MCF 10A (cell line): ENCODE measurements at regions of chr16 and their contacts with region 1.

Region 1: GRCh38 chr16:13453938-13454553 is 465.9 kb upstream of the ERCC4 start:
- DNase-seq: peak; percentile 58
- H3K4me3 Mint-ChIP-seq: no peak overlapping the region
- H3K27ac Mint-ChIP-seq: peak overlapping the region; percentile 75
- H3K4me1 Mint-ChIP-seq: peaks cover 23% of the 10 kb centered on the region
- H3K27me3 Mint-ChIP-seq: no peaks in the 10 kb centered on the region
- CTCF ChIP-seq: peak; percentile 62

Region 2: GRCh38 chr16:12455287-12455798 is 998.7 kb before region 1 on chr16:
- CTCF ChIA-PET with region 1: interaction called, 13 read pairs
- POLR2A ChIA-PET with region 1: no interaction called
- intact Hi-C with region 1: loop called (anchors 1 kb)
- DNase-seq: peak; percentile 56
- H3K4me3 Mint-ChIP-seq: no peak overlapping the region
- H3K27ac Mint-ChIP-seq: no peak overlapping the region
- H3K4me1 Mint-ChIP-seq: no peaks in the 10 kb centered on the region
- H3K27me3 Mint-ChIP-seq: no peaks in the 10 kb centered on the region
- CTCF ChIP-seq: peak; percentile 95

Region 3: DNA sequence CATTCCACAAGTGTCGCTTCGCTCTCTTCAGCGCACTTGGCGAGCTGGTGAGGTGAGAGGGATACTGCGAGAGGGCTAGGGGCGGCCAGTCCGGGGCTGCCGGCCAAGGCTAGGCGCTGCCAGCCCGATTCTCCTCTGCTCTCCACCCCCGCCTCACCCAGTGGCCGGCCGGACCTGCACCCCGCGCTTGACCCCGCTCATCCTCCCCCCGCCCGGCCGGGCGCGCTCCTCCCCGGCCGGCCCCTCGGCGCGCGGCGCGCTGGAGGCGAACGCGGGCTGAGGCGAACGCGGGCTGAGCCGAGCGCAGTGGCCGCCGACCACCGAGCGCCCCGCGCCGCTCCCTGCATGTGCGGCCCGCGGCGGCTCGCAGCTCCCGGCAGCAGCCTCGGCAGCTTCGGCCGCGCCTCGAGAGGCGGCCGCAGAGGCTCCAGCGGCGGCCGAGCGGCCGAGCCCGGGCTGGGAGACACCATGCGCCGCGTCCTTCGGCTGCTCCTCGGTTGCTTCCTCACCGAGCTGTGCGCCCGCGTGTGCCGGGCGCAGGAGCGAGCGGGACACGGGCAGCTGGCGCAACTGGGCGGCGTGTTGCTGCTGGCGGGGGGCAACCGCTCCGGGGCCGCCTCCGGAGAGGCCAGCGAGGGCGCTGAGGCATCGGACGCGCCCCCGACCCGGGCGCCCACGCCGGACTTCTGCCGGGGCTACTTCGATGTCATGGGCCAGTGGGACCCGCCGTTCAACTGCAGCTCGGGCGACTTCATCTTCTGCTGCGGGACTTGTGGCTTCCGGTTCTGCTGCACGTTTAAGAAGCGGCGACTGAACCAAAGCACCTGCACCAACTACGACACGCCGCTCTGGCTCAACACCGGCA is 552.2 kb before region 1 on chr16 and contains the start of gene SHISA9:
- CTCF ChIA-PET with region 1: interaction called, 45 read pairs
- POLR2A ChIA-PET with region 1: no interaction called
- intact Hi-C with region 1: loop called (anchors 1 kb)
- DNase-seq: no peak
- H3K4me3 Mint-ChIP-seq: peak within 1 kb of the TSS; percentile 81
- H3K27ac Mint-ChIP-seq: no peak within 1 kb of the TSS
- H3K4me1 Mint-ChIP-seq: no peaks in the 10 kb centered on the region
- H3K27me3 Mint-ChIP-seq: peaks cover 11% of the 10 kb centered on the region
- CTCF ChIP-seq: no peak
- total RNA-seq, gene SHISA9: 6.8 and 8.0 TPM in 2 replicates

Region 4: GRCh38 chr16:12971241-12971640 is 482.8 kb before region 1 on chr16:
- CTCF ChIA-PET with region 1: interaction called, 14 read pairs
- POLR2A ChIA-PET with region 1: no interaction called
- intact Hi-C with region 1: loop called (anchors 5 kb)
- DNase-seq: peak; percentile 98
- H3K4me3 Mint-ChIP-seq: no peak overlapping the region
- H3K27ac Mint-ChIP-seq: no peak overlapping the region
- H3K4me1 Mint-ChIP-seq: peaks cover 14% of the 10 kb centered on the region
- H3K27me3 Mint-ChIP-seq: no peaks in the 10 kb centered on the region
- CTCF ChIP-seq: no peak

Region 5: DNA sequence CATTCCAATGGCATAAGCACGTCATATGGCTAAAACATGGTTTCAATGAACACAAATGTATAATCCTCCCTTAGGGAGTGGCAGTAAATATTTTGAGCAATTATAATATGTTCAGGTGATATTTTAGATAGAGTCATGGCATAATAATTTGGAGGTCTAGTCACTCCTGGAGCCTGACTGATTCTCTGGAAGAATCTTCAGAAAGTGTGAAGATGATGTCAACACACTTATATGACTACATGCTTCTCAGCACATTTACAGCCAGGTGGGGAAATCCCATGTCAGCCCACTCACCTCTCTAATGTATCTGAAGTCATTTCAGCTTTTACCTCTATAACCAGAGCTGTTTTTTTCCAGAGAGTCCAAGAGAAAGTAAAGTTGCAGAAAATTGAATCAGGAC is 77.9 kb before region 1 on chr16:
- CTCF ChIA-PET with region 1: interaction called, 13 read pairs
- POLR2A ChIA-PET with region 1: no interaction called
- intact Hi-C with region 1: loop called (anchors 2 kb)
- DNase-seq: no peak
- H3K4me3 Mint-ChIP-seq: no peak overlapping the region
- H3K27ac Mint-ChIP-seq: peak overlapping the region; percentile 39
- H3K4me1 Mint-ChIP-seq: peaks cover 12% of the 10 kb centered on the region
- H3K27me3 Mint-ChIP-seq: no peaks in the 10 kb centered on the region
- CTCF ChIP-seq: no peak

Region 6: GRCh38 chr16:13483121-13483520 is 29.1 kb after region 1 on chr16:
- CTCF ChIA-PET with region 1: no interaction called
- POLR2A ChIA-PET with region 1: no interaction called
- intact Hi-C with region 1: no loop called
- DNase-seq: peak; percentile 20
- H3K4me3 Mint-ChIP-seq: no peak overlapping the region
- H3K27ac Mint-ChIP-seq: no peak overlapping the region
- H3K4me1 Mint-ChIP-seq: no peaks in the 10 kb centered on the region
- H3K27me3 Mint-ChIP-seq: no peaks in the 10 kb centered on the region
- CTCF ChIP-seq: no peak